HepG2 (cell line): ENCODE measurements at regions of chr9 and their contacts with region 1.

Region 1: DNA sequence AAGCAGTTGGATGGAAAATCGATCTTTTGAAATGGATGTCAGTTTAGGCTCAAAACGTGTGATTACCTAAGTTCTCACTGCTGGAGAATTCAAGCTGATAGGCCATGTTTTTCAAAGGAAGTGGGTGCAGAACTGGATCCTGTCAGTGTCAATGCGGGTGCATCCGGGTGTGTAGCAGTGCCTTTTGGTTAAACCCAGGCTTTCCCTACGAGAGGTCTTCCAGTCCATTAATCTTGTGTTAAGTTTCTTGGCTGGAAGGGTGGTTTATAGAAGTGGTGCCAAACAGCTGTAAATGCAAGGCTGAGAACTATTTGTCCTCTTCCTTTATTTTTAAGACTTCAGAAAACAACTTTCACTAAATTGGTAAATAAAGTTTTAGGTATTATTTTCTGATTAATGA is 71.9 kb downstream of the DAPK1 start:
- DNase-seq: peak; percentile 63
- ATAC-seq: peak; percentile 61
- H3K4me3 ChIP-seq: peak overlapping the region; percentile 19 to 51 (median 47)
- H3K27ac ChIP-seq: peak overlapping the region; percentile 98
- H3K4me1 ChIP-seq: peaks cover 71% of the 10 kb centered on the region
- H3K27me3 ChIP-seq: no peaks in the 10 kb centered on the region
- CTCF ChIP-seq: no peak
- EP300 ChIP-seq: no peak
- POLR2A ChIP-seq: 0 out of 4 replicates have a peak, but pooled peaks of 1 of the 2 experiments have one; percentile 7
- RAD21 ChIP-seq: no peak

Region 2: GRCh38 chr9:87497604-87498045 is 71.9 kb before region 1 on chr9 and contains the start of gene DAPK1:
- CTCF ChIA-PET with region 1: no interaction called
- POLR2A ChIA-PET with region 1: interaction called, 28 read pairs
- in situ Hi-C with region 1: no loop called
- intact Hi-C with region 1: loop called (anchors 2 kb)
- DNase-seq: peak; percentile 55
- ATAC-seq: peak; percentile 87
- H3K4me3 ChIP-seq: peak within 1 kb of the TSS; percentile 79 to 87 (median 85)
- H3K27ac ChIP-seq: peak within 1 kb of the TSS; percentile 86
- H3K4me1 ChIP-seq: peaks cover 50% of the 10 kb centered on the region
- H3K27me3 ChIP-seq: peaks cover 4 to 5% of the 10 kb centered on the region in 2 experiments; a peak in 2 of 5 replicates
- CTCF ChIP-seq: peak; percentile 61
- EP300 ChIP-seq: no peak
- POLR2A ChIP-seq: peak; percentile 49 to 72; a peak in 3 of 4 replicates
- RAD21 ChIP-seq: peak; percentile 24; the same call in 1 of the 2 replicates
- total RNA-seq, gene DAPK1: 34.0 and 35.9 TPM in 2 replicates

Region 3: DNA sequence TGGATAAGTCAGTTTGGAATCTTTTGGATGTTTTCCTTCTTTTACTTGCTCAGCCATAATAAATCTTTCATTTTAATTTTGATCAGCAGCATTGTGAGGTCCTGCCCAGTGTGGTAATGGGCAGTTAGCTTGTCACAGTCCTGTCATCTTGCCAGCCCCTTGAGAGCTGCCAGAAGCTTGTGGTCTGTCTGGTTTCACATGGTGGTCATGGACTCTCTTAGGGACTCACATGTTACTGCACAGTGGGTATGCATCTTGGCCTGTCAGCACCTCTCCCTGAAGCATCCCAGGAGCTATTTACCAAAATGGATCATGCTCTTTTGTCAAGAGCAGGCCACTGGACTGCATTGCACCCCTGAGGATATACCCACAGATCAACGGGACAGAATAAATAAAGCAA is 11.5 kb before region 1 on chr9:
- CTCF ChIA-PET with region 1: no interaction called
- POLR2A ChIA-PET with region 1: interaction called, 21 read pairs
- in situ Hi-C with region 1: no loop called
- intact Hi-C with region 1: no loop called
- DNase-seq: no peak
- ATAC-seq: no peak
- H3K4me3 ChIP-seq: no peak overlapping the region
- H3K27ac ChIP-seq: no peak overlapping the region
- H3K4me1 ChIP-seq: no peaks in the 10 kb centered on the region
- H3K27me3 ChIP-seq: no peaks in the 10 kb centered on the region
- CTCF ChIP-seq: no peak
- EP300 ChIP-seq: no peak
- POLR2A ChIP-seq: no peak
- RAD21 ChIP-seq: no peak

Region 4: DNA sequence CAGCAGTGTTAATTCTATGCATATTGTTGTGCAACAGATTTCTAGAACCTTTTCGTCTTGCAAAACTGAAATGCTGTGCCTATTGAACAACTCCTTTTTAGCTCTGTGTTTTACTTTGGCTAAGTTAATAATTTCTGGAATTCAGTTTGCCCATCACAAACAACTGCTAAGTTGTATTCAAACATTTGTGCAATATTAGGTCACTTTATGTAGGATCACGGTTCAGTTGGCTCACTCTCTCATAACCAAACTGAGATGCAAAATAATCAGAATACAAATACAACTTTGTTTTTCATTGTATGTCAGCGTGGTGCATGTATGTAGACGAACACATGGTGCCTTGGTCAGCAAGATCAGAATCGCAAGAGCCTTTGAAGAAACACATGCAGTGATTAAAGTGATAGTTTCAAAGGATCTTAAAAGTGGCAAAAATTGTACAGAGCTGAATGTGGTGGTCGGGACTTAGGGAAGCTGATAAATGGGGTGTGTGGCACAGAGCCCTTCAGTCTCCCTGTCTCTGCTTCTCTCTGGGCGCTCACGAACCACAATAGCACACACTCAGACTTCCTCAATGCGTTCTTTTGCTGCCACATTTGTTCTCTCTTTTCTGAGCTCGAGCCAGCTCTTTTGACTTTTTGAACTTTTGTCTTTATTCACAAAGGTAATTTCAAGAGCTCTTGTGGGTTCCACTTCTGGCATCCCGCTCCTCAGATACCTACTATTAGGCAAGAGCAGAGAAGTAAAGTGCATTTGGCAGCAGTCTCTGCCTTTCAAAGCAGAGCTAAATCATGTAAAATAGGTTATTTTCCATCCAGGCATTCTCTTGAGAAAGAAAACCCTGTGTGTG is 44.0 kb after region 1 on chr9:
- CTCF ChIA-PET with region 1: no interaction called
- POLR2A ChIA-PET with region 1: interaction called, 111 read pairs
- in situ Hi-C with region 1: no loop called
- intact Hi-C with region 1: loop called (anchors 1 kb)
- DNase-seq: peak; percentile 96
- ATAC-seq: peak; percentile 93
- H3K4me3 ChIP-seq: peak overlapping the region in 2 of 3 experiments; percentile 0 to 41; a peak in 2 of 6 replicates
- H3K27ac ChIP-seq: peak overlapping the region; percentile 93
- H3K4me1 ChIP-seq: peaks cover 61% of the 10 kb centered on the region
- H3K27me3 ChIP-seq: no peaks in the 10 kb centered on the region
- CTCF ChIP-seq: no peak
- EP300 ChIP-seq: peak in 1 of 2 experiments; percentile 93; a peak in 2 of 4 replicates
- POLR2A ChIP-seq: 0 out of 4 replicates have a peak, but pooled peaks of 1 of the 2 experiments have one; percentile 38
- RAD21 ChIP-seq: no peak